ENCODE measurements at regions of chr11 and their contacts with region 1.

Region 1: GRCh38 chr11:93741094-93741881 is at the starts of genes C11orf54 and TAF1D:
- DNase-seq: peak; percentile 92 to 99 (median 96)
- ATAC-seq: peak; percentile 90
- H3K4me3 ChIP-seq: peak within 1 kb of the TSS; percentile 88
- H3K4me3 Mint-ChIP-seq: peak within 1 kb of the TSS; percentile 98
- H3K27ac ChIP-seq: peak within 1 kb of the TSS; percentile 95 to 97
- H3K27ac Mint-ChIP-seq: peak within 1 kb of the TSS; percentile 98
- H3K4me1 ChIP-seq: peaks cover 22% of the 10 kb centered on the region
- H3K4me1 Mint-ChIP-seq: peaks cover 76% of the 10 kb centered on the region
- H3K27me3 ChIP-seq: no peaks in the 10 kb centered on the region
- H3K27me3 Mint-ChIP-seq: no peaks in the 10 kb centered on the region
- CTCF ChIP-seq: no peak
- total RNA-seq, gene C11orf54: 6.8 to 8.0 TPM
- total RNA-seq, gene TAF1D: 161 to 173 TPM

Region 2: GRCh38 chr11:93662177-93662575 is 79.1 kb before region 1 on chr11:
- CTCF ChIA-PET with region 1: no interaction called
- POLR2A ChIA-PET with region 1: interaction called, 24 read pairs
- intact Hi-C with region 1: loop called in 1 of 2 experiments (anchors 5 kb)
- DNase-seq: no peak
- ATAC-seq: no peak
- H3K4me3 ChIP-seq: peak overlapping the region; percentile 80
- H3K4me3 Mint-ChIP-seq: peak overlapping the region; percentile 85
- H3K27ac ChIP-seq: peak overlapping the region; percentile 80 to 91
- H3K27ac Mint-ChIP-seq: peak overlapping the region; percentile 83
- H3K4me1 ChIP-seq: peaks cover 11% of the 10 kb centered on the region
- H3K4me1 Mint-ChIP-seq: peaks cover 48% of the 10 kb centered on the region
- H3K27me3 ChIP-seq: no peaks in the 10 kb centered on the region
- H3K27me3 Mint-ChIP-seq: no peaks in the 10 kb centered on the region
- CTCF ChIP-seq: no peak

Region 3: GRCh38 chr11:93727985-93728791 is 13.1 kb before region 1 on chr11:
- CTCF ChIA-PET with region 1: interaction called, 6 read pairs
- POLR2A ChIA-PET with region 1: interaction called, 34 read pairs
- intact Hi-C with region 1: no loop called
- DNase-seq: no peak
- ATAC-seq: no peak
- H3K4me3 ChIP-seq: no peak overlapping the region
- H3K4me3 Mint-ChIP-seq: no peak overlapping the region
- H3K27ac ChIP-seq: no peak overlapping the region
- H3K27ac Mint-ChIP-seq: peak overlapping the region; percentile 63
- H3K4me1 ChIP-seq: no peaks in the 10 kb centered on the region
- H3K4me1 Mint-ChIP-seq: peaks cover 17% of the 10 kb centered on the region
- H3K27me3 ChIP-seq: no peaks in the 10 kb centered on the region
- H3K27me3 Mint-ChIP-seq: no peaks in the 10 kb centered on the region
- CTCF ChIP-seq: no peak

Region 4: GRCh38 chr11:94128746-94129511 is 387.6 kb after region 1 on chr11 and contains the start of gene PANX1:
- CTCF ChIA-PET with region 1: no interaction called
- POLR2A ChIA-PET with region 1: interaction called, 26 read pairs
- intact Hi-C with region 1: no loop called
- DNase-seq: peak; percentile 42 to 93 (median 64)
- ATAC-seq: peak; percentile 81
- H3K4me3 ChIP-seq: peak within 1 kb of the TSS; percentile 91
- H3K4me3 Mint-ChIP-seq: peak within 1 kb of the TSS; percentile 93
- H3K27ac ChIP-seq: peak within 1 kb of the TSS; percentile 64 to 90
- H3K27ac Mint-ChIP-seq: peak within 1 kb of the TSS; percentile 90
- H3K4me1 ChIP-seq: peaks cover 47% of the 10 kb centered on the region
- H3K4me1 Mint-ChIP-seq: peaks cover 26% of the 10 kb centered on the region
- H3K27me3 ChIP-seq: no peaks in the 10 kb centered on the region
- H3K27me3 Mint-ChIP-seq: no peaks in the 10 kb centered on the region
- CTCF ChIP-seq: no peak
- total RNA-seq, gene PANX1: 4.8 to 4.9 TPM

Region 5: GRCh38 chr11:95089620-95090542 is 1348.6 kb after region 1 on chr11 and contains the start of gene ENDOD1:
- CTCF ChIA-PET with region 1: no interaction called
- POLR2A ChIA-PET with region 1: interaction called, 12 read pairs
- intact Hi-C with region 1: no loop called
- DNase-seq: peak; percentile 70 to 94 (median 84)
- ATAC-seq: peak; percentile 94
- H3K4me3 ChIP-seq: peak within 1 kb of the TSS; percentile 78
- H3K4me3 Mint-ChIP-seq: peak within 1 kb of the TSS; percentile 92
- H3K27ac ChIP-seq: peak within 1 kb of the TSS; percentile 77 to 84
- H3K27ac Mint-ChIP-seq: peak within 1 kb of the TSS; percentile 95
- H3K4me1 ChIP-seq: peaks cover 34% of the 10 kb centered on the region
- H3K4me1 Mint-ChIP-seq: peaks cover 50% of the 10 kb centered on the region
- H3K27me3 ChIP-seq: no peaks in the 10 kb centered on the region
- H3K27me3 Mint-ChIP-seq: no peaks in the 10 kb centered on the region
- CTCF ChIP-seq: no peak
- total RNA-seq, gene ENDOD1: 3.8 to 4.4 TPM